ENCODE measurements at regions of chr12 and their contacts with region 1.

Region 1: GRCh38 chr12:84198294-84198946 is 714.2 kb downstream of the SLC6A15 start:
- DNase-seq: no peak
- H3K4me3 ChIP-seq: no peak overlapping the region
- H3K27ac ChIP-seq: no peak overlapping the region
- H3K4me1 ChIP-seq: no peaks in the 10 kb centered on the region
- H3K27me3 ChIP-seq: no peaks in the 10 kb centered on the region
- CTCF ChIP-seq: no peak
- EP300 ChIP-seq: no peak
- POLR2A ChIP-seq: no peak

Region 2: GRCh38 chr12:83451189-83451588 is 747.2 kb before region 1 on chr12:
- in situ Hi-C with region 1: no loop called
- intact Hi-C with region 1: no loop called
- DNase-seq: no peak
- H3K4me3 ChIP-seq: no peak overlapping the region
- H3K27ac ChIP-seq: no peak overlapping the region
- H3K4me1 ChIP-seq: no peaks in the 10 kb centered on the region
- H3K27me3 ChIP-seq: no peaks in the 10 kb centered on the region
- CTCF ChIP-seq: no peak
- EP300 ChIP-seq: no peak
- POLR2A ChIP-seq: no peak

Region 3: GRCh38 chr12:83893101-83893500 is 305.3 kb before region 1 on chr12:
- in situ Hi-C with region 1: no loop called
- intact Hi-C with region 1: no loop called
- DNase-seq: no peak
- H3K4me3 ChIP-seq: no peak overlapping the region
- H3K27ac ChIP-seq: no peak overlapping the region
- H3K4me1 ChIP-seq: no peaks in the 10 kb centered on the region
- H3K27me3 ChIP-seq: no peaks in the 10 kb centered on the region
- CTCF ChIP-seq: no peak
- EP300 ChIP-seq: no peak
- POLR2A ChIP-seq: no peak

Region 4: DNA sequence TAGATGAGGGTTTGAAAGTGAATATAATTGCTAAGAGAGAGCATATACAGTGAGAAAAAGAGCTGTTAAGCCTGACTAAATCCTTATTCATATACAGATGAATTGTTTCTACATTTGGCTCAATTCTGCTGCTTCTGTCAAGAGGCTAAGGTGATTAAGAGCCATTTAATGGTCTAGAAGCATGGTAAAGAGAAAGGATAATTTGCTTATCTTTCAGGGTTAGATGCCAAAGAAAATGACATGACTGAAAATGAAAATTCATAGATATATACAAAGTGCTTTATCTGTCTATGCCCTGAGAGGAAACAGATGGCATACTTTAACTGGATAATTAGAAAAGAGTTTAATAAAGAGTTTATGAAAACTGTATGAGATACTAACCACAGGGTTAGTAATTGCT is 120.7 kb before region 1 on chr12:
- in situ Hi-C with region 1: loop called in 1 of 4 experiments (anchors 25 kb)
- intact Hi-C with region 1: no loop called
- DNase-seq: no peak
- H3K4me3 ChIP-seq: no peak overlapping the region
- H3K27ac ChIP-seq: no peak overlapping the region
- H3K4me1 ChIP-seq: no peaks in the 10 kb centered on the region
- H3K27me3 ChIP-seq: no peaks in the 10 kb centered on the region
- CTCF ChIP-seq: no peak
- EP300 ChIP-seq: no peak
- POLR2A ChIP-seq: no peak